ENCODE measurements at regions of chr6 and their contacts with region 1.

Region 1: DNA sequence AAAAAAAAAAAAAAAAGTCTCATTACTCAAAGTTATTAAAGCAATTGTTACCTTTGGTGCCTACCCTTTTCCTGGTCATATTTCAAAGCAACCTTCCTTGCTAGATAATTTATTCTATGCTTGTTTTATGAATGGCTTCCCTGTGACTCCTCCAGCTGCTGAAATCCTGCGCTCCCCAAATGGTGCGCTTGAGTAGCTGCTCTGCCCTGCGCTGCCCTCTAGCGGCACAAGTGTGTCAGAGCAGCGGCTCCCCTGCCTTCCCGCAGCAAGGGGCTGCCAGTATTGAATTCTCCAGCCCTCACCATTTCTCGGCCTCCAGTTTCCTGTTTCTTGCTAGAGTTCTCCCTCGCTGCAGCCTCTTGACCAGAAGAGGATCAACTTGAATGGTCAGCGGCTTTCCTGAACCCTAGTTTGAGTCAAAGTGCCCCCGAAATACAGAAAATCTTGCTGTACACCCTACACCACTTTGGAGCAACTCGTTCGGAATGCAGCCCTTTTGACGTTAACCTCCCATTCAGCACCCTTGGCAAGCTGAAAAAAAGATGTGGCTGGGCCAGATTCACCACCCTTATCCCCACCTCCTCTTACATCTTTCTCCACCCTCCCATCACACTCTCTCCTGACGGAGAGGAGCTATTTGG is 60.4 kb upstream of the KLHL31 start:
- DNase-seq: peak; percentile 88
- ATAC-seq: peak; percentile 82

Region 2: GRCh38 chr6:53544470-53545308 is 181.2 kb before region 1 on chr6 and contains the start of gene GCLC:
- intact Hi-C with region 1: loop called (anchors 5 kb)
- DNase-seq: peak; percentile 98
- ATAC-seq: peak; percentile 84
- total RNA-seq, gene GCLC: 26.7 TPM

Region 3: DNA sequence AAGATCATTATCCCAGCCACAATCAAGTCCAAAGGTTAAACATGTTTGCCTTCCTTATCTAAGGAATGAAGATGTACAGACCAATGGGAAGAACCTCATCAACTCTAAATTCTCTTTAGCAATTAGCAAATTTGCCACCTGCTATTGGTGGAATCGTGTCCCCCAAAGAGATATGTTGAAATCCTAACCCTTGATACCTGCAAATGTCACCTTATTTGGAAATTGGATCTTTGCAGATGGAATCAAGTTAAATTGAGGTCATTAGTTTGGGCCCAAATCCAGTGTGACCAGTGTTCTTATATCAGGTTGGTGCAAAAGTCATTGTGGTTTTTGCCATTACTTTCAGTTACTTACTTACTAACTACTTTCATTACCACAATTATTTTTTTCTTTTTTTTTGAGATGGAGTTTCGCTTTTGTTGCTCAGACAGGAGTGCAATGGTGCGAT is 91.7 kb before region 1 on chr6:
- intact Hi-C with region 1: no loop called
- DNase-seq: no peak
- ATAC-seq: no peak